ENCODE measurements at regions of chr5 and their contacts with region 1.

Region 1: GRCh38 chr5:178940569-178941360 is at the start of gene ZNF454:
- DNase-seq: peak; percentile 92 to 98 (median 96)
- H3K4me3 ChIP-seq: peak within 1 kb of the TSS; percentile 54 to 98 (median 83)
- H3K27ac ChIP-seq: peak within 1 kb of the TSS in 56 of 59 donors; percentile 3 to 91 (median 80)
- H3K27me3 ChIP-seq: no peaks in the 10 kb centered on the region
- CTCF ChIP-seq: peak in 41 of 56 donors; percentile 7 to 57 (median 34)
- total RNA-seq, gene ZNF454: 6.5 to 17.7 (median 10.3) TPM

Region 2: GRCh38 chr5:178626484-178627258 is 314.1 kb before region 1 on chr5 and contains the start of gene CLK4:
- intact Hi-C with region 1: loop called in 1 of 2 experiments (anchors 5 kb)
- DNase-seq: peak; percentile 86 to 97 (median 95)
- H3K4me3 ChIP-seq: peak within 1 kb of the TSS; percentile 58 to 99 (median 92)
- H3K27ac ChIP-seq: peak within 1 kb of the TSS; percentile 58 to 99 (median 95)
- H3K27me3 ChIP-seq: no peaks in the 10 kb centered on the region
- CTCF ChIP-seq: peak in 11 of 56 donors; percentile 4 to 43 (median 19)
- total RNA-seq, gene CLK4: 39.0 to 95.3 (median 58.1) TPM

Region 3: GRCh38 chr5:178732281-178732680 is 208.5 kb before region 1 on chr5:
- intact Hi-C with region 1: loop called (anchors 5 to 10 kb)
- DNase-seq: no peak
- H3K4me3 ChIP-seq: no peak overlapping the region
- H3K27ac ChIP-seq: peak overlapping the region in 22 of 59 donors; percentile 1 to 59 (median 36)
- H3K27me3 ChIP-seq: no peaks in the 10 kb centered on the region
- CTCF ChIP-seq: no peak

Region 4: GRCh38 chr5:178859625-178860531 is 80.9 kb before region 1 on chr5 and contains the start of gene ZNF354B:
- intact Hi-C with region 1: loop called (anchors 2 to 5 kb)
- DNase-seq: peak; percentile 77 to 95 (median 92)
- H3K4me3 ChIP-seq: peak within 1 kb of the TSS; percentile 56 to 95 (median 83)
- H3K27ac ChIP-seq: peak within 1 kb of the TSS in 57 of 59 donors; percentile 6 to 91 (median 78)
- H3K27me3 ChIP-seq: no peaks in the 10 kb centered on the region
- CTCF ChIP-seq: peak in 47 of 56 donors; percentile 14 to 66 (median 45)
- total RNA-seq, gene ZNF354B: 13.5 to 33.5 (median 21.8) TPM

Region 5: GRCh38 chr5:178895651-178896571 is 44.9 kb before region 1 on chr5 and contains the start of gene ZFP2:
- intact Hi-C with region 1: loop called (anchors 2 kb)
- DNase-seq: peak; percentile 47 to 85 (median 72)
- H3K4me3 ChIP-seq: peak within 1 kb of the TSS; percentile 60 to 97 (median 87)
- H3K27ac ChIP-seq: peak within 1 kb of the TSS; percentile 58 to 95 (median 83)
- H3K27me3 ChIP-seq: no peaks in the 10 kb centered on the region
- CTCF ChIP-seq: peak in 16 of 56 donors; percentile 8 to 34 (median 21)
- total RNA-seq, gene ZFP2: 2.9 to 11.1 (median 5.7) TPM

Region 6: DNA sequence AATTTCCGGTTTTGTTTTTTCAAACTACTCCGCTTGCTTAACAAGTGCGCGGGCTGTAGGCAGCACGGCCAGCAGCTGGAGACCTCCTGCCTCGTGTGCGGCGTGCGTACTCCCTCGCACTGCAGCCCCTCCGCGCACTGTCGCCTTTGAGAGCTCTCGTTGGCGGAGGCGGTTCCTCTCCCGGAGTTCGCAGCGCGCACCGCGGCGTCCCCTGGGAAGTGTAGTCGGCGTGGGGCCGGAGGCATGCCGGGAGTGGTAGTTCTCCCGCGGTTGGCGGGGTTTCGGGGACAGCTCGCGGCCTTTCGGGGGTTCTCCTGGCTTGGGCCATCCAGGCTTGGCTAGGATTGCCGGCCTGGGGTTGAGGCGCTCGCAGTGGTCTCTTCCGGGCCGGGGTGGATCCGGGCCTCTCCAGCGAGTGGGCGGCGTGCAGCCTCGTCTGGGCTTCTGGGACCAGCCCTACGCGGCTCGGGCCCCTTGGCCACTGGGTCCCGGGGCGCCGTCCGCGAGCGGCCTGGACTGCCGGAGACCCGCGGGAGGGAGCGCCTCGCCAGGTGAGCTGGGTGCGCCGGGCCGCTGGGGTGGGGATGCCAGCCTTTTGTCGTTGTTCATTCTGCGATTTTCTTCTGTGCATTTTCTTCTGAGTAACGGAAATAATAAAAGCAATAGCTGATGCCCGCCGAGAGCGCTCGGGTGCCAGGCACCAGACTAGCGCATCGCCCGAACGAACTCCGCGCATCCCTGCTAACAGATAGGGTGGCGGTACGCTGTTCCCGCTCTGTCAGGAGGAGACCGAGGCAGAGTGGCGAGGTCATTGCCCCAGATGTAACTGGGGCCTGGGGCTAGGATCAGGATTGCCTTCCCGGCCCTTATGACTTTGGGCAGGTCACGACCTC is 119.6 kb after region 1 on chr5 and contains the start of gene ZNF354C:
- intact Hi-C with region 1: loop called in 1 of 2 experiments (anchors 2 kb)
- DNase-seq: peak; percentile 78 to 94 (median 85)
- H3K4me3 ChIP-seq: peak within 1 kb of the TSS; percentile 47 to 97 (median 79)
- H3K27ac ChIP-seq: peak within 1 kb of the TSS in 58 of 59 donors; percentile 7 to 87 (median 74)
- H3K27me3 ChIP-seq: peaks cover 0 to 7% (median 0%) of the 10 kb centered on the region in 45 donors
- CTCF ChIP-seq: peak in 36 of 56 donors; percentile 7 to 60 (median 28)
- total RNA-seq, gene ZNF354C: 4.6 to 10.9 (median 7.7) TPM